WTC11 (cell line): ENCODE measurements at regions of chr21 and their contacts with region 1.

Region 1: GRCh38 chr21:45973659-45974072 is 7.9 kb upstream of the COL6A1 start:
- DNase-seq: peak; percentile 68
- ATAC-seq: peak; percentile 3
- H3K4me3 Mint-ChIP-seq: peak overlapping the region; percentile 78
- H3K27ac Mint-ChIP-seq: no peak overlapping the region
- H3K4me1 Mint-ChIP-seq: peaks cover 20% of the 10 kb centered on the region
- H3K27me3 Mint-ChIP-seq: no peaks in the 10 kb centered on the region; the same call in 1 of the 2 replicates
- CTCF ChIP-seq: no peak

Region 2: GRCh38 chr21:45820171-45821091 is 153.2 kb before region 1 on chr21:
- CTCF ChIA-PET with region 1: no interaction called
- POLR2A ChIA-PET with region 1: no interaction called
- DNase-seq: peak; percentile 89
- ATAC-seq: peak; percentile 92
- H3K4me3 Mint-ChIP-seq: no peak overlapping the region
- H3K27ac Mint-ChIP-seq: peak overlapping the region; percentile 85; the same call in 1 of the 2 replicates
- H3K4me1 Mint-ChIP-seq: peaks cover 22% of the 10 kb centered on the region
- H3K27me3 Mint-ChIP-seq: no peaks in the 10 kb centered on the region
- CTCF ChIP-seq: peak; percentile 68

Region 3: DNA sequence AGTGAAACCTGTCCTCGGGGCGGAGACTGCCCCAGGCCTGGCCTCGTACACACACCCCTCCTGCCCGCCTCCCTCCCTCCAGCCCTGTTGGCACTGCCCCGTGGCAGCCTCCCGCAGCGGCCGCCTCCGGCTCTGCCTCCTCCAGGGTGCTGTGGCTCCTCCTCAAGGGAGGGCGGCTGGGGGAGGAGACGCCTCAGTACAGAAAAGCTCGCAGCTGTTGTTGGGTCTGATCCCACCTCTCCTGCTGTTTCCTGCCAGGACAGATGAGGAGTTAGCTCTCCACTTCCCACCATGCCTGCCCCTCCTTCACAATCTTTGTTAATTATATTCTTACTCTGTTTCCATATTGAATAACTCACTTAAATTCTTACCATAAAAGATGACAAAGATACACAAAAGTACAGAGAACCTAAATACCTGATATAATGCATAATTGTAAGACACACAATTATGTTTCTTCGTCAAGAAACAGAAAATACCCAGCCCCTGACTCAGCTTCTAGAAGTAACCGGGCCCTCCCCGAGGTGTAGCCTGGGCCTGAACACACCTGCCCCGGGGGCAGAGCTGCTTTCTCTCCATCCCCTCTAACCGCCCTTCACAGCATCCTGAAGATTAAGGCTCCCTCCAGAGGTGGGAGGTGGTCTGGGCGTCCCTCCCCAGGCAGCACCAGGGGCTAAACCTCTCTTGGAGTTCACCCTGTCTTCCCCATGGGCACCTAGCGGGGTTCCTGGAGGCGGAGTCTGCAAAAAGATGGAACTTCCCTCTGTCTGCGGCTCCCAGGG is 22.7 kb before region 1 on chr21:
- CTCF ChIA-PET with region 1: interaction called, 15 read pairs
- POLR2A ChIA-PET with region 1: no interaction called
- DNase-seq: no peak
- ATAC-seq: peak; percentile 41
- H3K4me3 Mint-ChIP-seq: no peak overlapping the region
- H3K27ac Mint-ChIP-seq: peak overlapping the region; percentile 26; the same call in 1 of the 2 replicates
- H3K4me1 Mint-ChIP-seq: peaks cover 14% of the 10 kb centered on the region
- H3K27me3 Mint-ChIP-seq: peaks cover 6% of the 10 kb centered on the region
- CTCF ChIP-seq: no peak

Region 4: DNA sequence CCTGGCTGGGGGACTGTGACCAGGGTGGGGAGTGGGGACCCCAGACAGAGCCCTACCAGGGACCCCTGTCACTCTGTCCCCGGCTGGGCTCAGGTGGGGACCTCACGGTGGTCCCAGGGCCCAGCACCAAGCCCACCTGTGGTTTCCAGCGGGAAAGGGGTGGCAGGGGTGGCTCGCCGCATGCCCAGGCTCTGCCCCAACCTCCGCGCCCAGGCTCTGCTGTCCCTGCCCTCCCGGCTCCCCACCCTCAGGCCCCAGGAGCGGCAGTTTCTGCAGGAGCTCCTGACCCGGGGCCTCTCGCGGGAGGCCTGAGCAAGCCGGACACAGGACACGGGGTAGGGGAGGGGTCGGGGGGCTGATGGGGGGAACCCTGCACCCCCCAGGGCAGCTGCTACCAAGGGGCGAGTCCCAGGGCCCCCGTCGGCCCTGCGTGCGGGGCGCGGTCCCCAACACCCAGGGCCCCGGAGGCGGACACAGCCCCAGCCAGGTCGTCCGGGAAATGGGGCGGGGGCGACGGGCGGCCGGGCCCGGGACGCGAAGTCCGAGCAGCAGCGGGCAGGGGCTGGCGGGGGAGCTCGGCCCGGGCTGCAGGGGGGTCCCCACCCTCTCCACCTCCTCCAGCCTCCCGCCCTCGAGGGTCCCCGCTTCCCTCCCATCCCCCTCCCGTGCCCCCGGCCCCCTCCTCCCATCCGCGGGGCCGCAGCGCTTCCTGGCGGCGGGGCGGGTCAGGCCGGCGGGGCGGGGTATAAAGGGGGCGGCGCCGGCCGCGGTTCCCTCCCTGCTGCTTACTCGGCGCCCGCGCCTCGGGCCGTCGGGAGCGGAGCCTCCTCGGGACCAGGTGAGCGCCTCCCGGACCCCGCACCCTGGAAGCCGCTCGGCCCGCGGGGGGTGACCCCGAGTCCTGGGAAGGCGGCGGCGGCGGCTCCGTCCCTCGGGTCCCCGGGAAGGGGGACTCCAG is 123.9 kb after region 1 on chr21 and contains the start of gene COL6A2:
- CTCF ChIA-PET with region 1: interaction called, 33 read pairs
- POLR2A ChIA-PET with region 1: no interaction called
- DNase-seq: peak; percentile 77
- ATAC-seq: peak; percentile 84
- H3K4me3 Mint-ChIP-seq: peak within 1 kb of the TSS; percentile 76
- H3K27ac Mint-ChIP-seq: no peak within 1 kb of the TSS
- H3K4me1 Mint-ChIP-seq: peaks cover 6% of the 10 kb centered on the region
- H3K27me3 Mint-ChIP-seq: peaks cover 8% of the 10 kb centered on the region
- CTCF ChIP-seq: no peak
- total RNA-seq, gene COL6A2: 111 to 138 TPM (median 138 TPM) in 3 replicates

Region 5: DNA sequence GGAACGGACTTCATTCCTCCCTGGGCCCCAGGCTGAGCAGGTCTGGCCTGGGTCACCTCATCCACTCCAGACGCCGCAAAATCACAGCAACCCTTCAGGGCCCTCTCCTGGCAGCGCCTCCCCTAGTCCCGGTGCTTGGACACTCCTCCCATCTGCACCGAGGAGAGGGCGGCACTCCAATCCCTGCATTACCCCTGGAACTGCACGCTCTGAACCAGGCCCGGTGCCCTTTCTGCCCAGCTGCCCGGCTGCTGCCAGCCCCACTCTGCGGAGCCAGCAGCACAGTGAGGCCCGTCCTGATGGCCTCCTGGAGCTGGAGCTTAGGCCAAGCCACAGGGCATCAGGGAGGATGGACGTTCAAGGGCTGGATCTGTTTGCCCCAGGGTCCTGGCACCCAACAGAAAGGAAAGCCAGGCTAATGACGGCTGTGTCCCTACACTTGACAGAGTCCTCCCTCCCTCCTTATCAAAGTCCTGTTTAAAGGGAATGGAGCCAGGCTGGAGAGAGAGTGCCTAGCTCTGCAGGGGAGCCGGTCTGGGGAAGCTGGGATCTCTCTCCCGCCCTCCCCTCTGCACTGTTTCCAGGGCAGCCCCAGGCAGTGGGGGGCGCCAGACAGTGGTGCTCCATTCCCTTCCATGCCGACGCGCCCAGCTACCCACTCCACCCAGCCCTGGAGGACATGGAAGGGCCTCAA is 137.0 kb after region 1 on chr21:
- CTCF ChIA-PET with region 1: interaction called, 13 read pairs
- POLR2A ChIA-PET with region 1: no interaction called
- DNase-seq: peak; percentile 25
- ATAC-seq: peak; percentile 69
- H3K4me3 Mint-ChIP-seq: no peak overlapping the region
- H3K27ac Mint-ChIP-seq: no peak overlapping the region
- H3K4me1 Mint-ChIP-seq: peaks cover 12% of the 10 kb centered on the region
- H3K27me3 Mint-ChIP-seq: peaks cover 2% of the 10 kb centered on the region; the same call in 1 of the 2 replicates
- CTCF ChIP-seq: no peak

Region 6: GRCh38 chr21:46128106-46128860 is 154.6 kb after region 1 on chr21:
- CTCF ChIA-PET with region 1: interaction called, 40 read pairs
- POLR2A ChIA-PET with region 1: no interaction called
- DNase-seq: no peak
- ATAC-seq: no peak
- H3K4me3 Mint-ChIP-seq: no peak overlapping the region
- H3K27ac Mint-ChIP-seq: peak overlapping the region; percentile 68; the same call in 1 of the 2 replicates
- H3K4me1 Mint-ChIP-seq: no peaks in the 10 kb centered on the region
- H3K27me3 Mint-ChIP-seq: no peaks in the 10 kb centered on the region; the same call in 1 of the 2 replicates
- CTCF ChIP-seq: no peak

Region 7: DNA sequence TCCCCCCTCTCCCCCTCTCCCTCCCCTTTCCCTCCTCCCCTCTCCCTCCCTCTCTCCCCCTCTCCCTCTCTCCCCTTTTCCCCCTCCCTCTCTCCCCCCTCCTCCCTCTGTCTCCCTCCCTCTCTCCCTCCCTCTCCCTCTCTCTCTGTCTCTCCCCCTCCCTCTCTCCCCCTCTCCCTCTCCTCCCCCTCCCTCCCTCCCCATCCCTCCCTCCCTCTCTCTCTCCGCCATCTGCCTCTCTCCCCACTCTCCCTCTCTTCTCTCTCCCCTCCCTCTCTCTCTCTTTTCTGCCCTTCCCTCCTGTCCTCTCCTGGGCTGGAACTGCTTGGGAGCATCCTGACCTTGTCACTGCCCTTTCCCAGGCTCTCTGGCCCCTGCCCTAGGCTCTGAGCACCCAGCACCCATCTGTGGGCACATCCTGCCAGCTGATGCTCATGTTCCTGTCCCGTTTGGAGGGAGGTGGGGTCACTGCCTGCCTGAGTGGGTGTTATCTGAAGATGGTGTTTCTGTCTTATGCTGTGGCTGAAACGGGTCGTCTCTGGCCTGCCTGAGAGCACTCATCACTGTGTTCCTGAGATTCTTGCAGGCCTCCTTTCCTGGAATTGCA is 170.9 kb after region 1 on chr21:
- CTCF ChIA-PET with region 1: interaction called, 36 read pairs
- POLR2A ChIA-PET with region 1: no interaction called
- DNase-seq: no peak
- ATAC-seq: no peak
- H3K4me3 Mint-ChIP-seq: no peak overlapping the region
- H3K27ac Mint-ChIP-seq: no peak overlapping the region
- H3K4me1 Mint-ChIP-seq: peaks cover 10% of the 10 kb centered on the region
- H3K27me3 Mint-ChIP-seq: no peaks in the 10 kb centered on the region
- CTCF ChIP-seq: no peak

Region 8: GRCh38 chr21:46153247-46154150 is 179.8 kb after region 1 on chr21:
- CTCF ChIA-PET with region 1: interaction called, 12 read pairs
- POLR2A ChIA-PET with region 1: interaction called, 3 read pairs
- DNase-seq: peak; percentile 87
- ATAC-seq: peak; percentile 86
- H3K4me3 Mint-ChIP-seq: no peak overlapping the region
- H3K27ac Mint-ChIP-seq: peak overlapping the region; percentile 45; the same call in 1 of the 2 replicates
- H3K4me1 Mint-ChIP-seq: peaks cover 9% of the 10 kb centered on the region
- H3K27me3 Mint-ChIP-seq: no peaks in the 10 kb centered on the region
- CTCF ChIP-seq: peak; percentile 78